ENCODE measurements at regions of chr19 and their contacts with region 1.

Region 1: GRCh38 chr19:13262450-13262849 is 112.2 kb downstream of the IER2 start:
- DNase-seq: no peak
- ATAC-seq: no peak
- H3K4me3 Mint-ChIP-seq: no peak overlapping the region
- H3K27ac Mint-ChIP-seq: no peak overlapping the region
- H3K4me1 Mint-ChIP-seq: peaks cover 4% of the 10 kb centered on the region; the same call in 1 of the 2 replicates
- H3K27me3 Mint-ChIP-seq: no peaks in the 10 kb centered on the region; the same call in 1 of the 2 replicates
- CTCF ChIP-seq: peak; percentile 19; the same call in 1 of the 2 replicates

Region 2: DNA sequence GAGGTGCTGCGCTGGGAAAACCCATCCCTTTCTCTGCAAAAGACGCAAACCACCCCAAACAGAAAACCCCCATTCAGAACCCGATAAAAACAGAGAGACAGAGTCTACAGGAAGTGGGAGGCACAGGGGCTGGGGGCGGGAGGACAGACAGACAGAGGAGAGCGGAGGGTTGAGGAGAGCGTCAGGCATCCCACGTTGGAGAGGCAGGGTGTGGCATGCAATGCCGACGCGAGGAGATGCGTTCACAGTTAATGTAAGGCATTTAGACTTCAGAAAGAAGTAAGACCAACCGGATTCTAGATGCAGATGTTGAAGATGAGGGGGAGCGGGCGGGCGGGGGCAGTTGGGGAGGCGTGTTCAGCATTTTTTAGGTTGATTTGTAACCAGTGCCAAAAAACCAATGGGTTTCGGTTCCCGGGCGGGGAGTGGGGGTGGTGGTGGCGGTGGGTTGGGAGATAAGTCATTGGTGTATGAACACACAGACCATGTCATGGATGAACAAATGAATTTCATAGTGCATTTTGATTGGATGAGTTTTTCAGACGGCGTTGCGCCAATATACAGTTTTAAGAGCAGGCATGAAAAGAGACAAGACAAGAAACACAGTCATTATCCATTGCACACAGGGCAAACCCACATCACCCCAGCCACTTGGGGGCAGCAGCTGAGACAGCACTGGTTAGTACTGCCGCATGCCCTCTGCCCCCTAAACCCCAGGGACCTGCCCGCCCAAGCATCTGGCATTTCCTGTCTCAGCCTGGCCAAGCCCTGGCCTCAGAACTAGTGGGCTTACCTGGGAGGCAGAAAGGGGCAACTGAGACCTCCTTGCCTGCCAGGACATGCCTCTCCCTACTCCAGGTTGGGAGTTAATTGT is 21.0 kb before region 1 on chr19:
- CTCF ChIA-PET with region 1: interaction called, 18 read pairs
- POLR2A ChIA-PET with region 1: interaction called, 4 read pairs
- DNase-seq: peak; percentile 61
- ATAC-seq: peak; percentile 82
- H3K4me3 Mint-ChIP-seq: no peak overlapping the region
- H3K27ac Mint-ChIP-seq: no peak overlapping the region; the same call in 1 of the 2 replicates
- H3K4me1 Mint-ChIP-seq: peaks cover 29% of the 10 kb centered on the region
- H3K27me3 Mint-ChIP-seq: peaks cover 5% of the 10 kb centered on the region; the same call in 1 of the 2 replicates
- CTCF ChIP-seq: no peak

Region 3: GRCh38 chr19:13334801-13335481 is 72.5 kb after region 1 on chr19:
- CTCF ChIA-PET with region 1: no interaction called
- POLR2A ChIA-PET with region 1: no interaction called
- DNase-seq: no peak
- ATAC-seq: no peak
- H3K4me3 Mint-ChIP-seq: no peak overlapping the region
- H3K27ac Mint-ChIP-seq: no peak overlapping the region
- H3K4me1 Mint-ChIP-seq: peaks cover 9% of the 10 kb centered on the region
- H3K27me3 Mint-ChIP-seq: no peaks in the 10 kb centered on the region; the same call in 1 of the 2 replicates
- CTCF ChIP-seq: no peak